HEK293 (cell line): ENCODE measurements at regions of chr3 and their contacts with region 1.

Region 1: GRCh38 chr3:179309225-179310078 is 13.4 kb upstream of the ZNF639 start:
- H3K4me3 ChIP-seq: no peak overlapping the region
- H3K27ac ChIP-seq: no peak overlapping the region
- H3K4me1 ChIP-seq: no peaks in the 10 kb centered on the region
- CTCF ChIP-seq: no peak

Region 2: GRCh38 chr3:179015551-179016020 is 293.9 kb before region 1 on chr3:
- CTCF ChIA-PET with region 1: interaction called, 27 read pairs
- POLR2A ChIA-PET with region 1: no interaction called
- H3K4me3 ChIP-seq: no peak overlapping the region
- H3K27ac ChIP-seq: no peak overlapping the region
- H3K4me1 ChIP-seq: no peaks in the 10 kb centered on the region
- CTCF ChIP-seq: peak; percentile 40; the same call in 1 of the 2 replicates

Region 3: DNA sequence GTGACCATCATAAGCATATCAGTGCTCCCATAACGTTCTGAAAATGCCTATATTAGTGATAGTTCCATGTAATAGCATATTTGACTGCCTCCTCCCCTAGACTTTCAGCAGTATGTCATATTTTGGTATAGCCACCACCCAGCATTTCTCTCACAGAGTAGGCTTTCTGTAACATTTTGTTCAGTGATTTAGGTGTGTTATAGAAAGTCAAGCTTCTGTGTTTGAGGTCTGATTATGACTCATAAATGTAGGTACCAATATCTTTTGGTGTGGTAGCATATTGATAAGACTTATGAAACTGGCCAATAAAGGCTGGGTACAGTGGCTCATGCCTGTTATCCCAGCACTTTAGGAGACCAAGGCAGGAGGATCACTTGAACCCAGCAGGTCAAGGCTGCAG is 203.6 kb before region 1 on chr3:
- CTCF ChIA-PET with region 1: interaction called, 10 read pairs
- POLR2A ChIA-PET with region 1: no interaction called
- H3K4me3 ChIP-seq: no peak overlapping the region
- H3K27ac ChIP-seq: no peak overlapping the region
- H3K4me1 ChIP-seq: no peaks in the 10 kb centered on the region
- CTCF ChIP-seq: no peak